Vagina (tissue), 2 donors: ENCODE measurements at regions of chr17 and their contacts with region 1.

Region 1: GRCh38 chr17:68424942-68425386 is 32.3 kb downstream of the WIPI1 start:
- DNase-seq: peak in 1 of 2 donors; percentile 80
- H3K4me3 ChIP-seq: no peak overlapping the region
- H3K27ac ChIP-seq: no peak overlapping the region
- H3K4me1 ChIP-seq: no peaks in the 10 kb centered on the region
- H3K27me3 ChIP-seq: no peaks in the 10 kb centered on the region
- CTCF ChIP-seq: no peak
- POLR2A ChIP-seq: no peak

Region 2: DNA sequence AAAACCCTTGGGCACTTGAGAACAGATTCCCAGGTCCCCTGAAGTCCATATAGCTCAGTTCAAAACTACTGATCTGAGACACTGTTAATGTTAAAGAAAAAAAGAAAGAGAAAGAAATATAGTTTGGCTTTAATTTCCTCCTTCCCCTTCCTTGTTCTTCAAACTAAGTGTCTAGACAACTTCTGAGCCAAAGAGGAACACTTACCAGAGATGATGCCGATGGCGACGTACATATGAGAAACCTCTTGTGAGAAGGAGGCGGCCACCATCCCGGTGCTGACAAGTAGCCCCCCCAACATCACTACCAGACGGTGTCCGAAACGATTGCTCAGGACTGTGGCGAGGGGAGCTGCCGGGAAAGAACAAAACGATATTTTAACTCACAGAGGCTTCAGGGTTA is 151.2 kb before region 1 on chr17:
- intact Hi-C with region 1: loop called (anchors 10 kb)
- DNase-seq: no peak
- H3K4me3 ChIP-seq: no peak overlapping the region
- H3K27ac ChIP-seq: no peak overlapping the region
- H3K4me1 ChIP-seq: no peaks in the 10 kb centered on the region
- H3K27me3 ChIP-seq: no peaks in the 10 kb centered on the region
- CTCF ChIP-seq: no peak
- POLR2A ChIP-seq: no peak